Left cardiac atrium (tissue), 4 donors: ENCODE measurements at regions of chr17 and their contacts with region 1.

Region 1: GRCh38 chr17:82781894-82782274 is 30.0 kb downstream of the TBCD start:
- DNase-seq: peak; percentile 84
- ATAC-seq: peak; percentile 94 to 97

Region 2: GRCh38 chr17:82876602-82877379 is 94.9 kb after region 1 on chr17:
- intact Hi-C with region 1: loop called in 1 of 2 experiments (anchors 10 kb)
- DNase-seq: peak; percentile 81
- ATAC-seq: peak; percentile 93 to 97

Region 3: GRCh38 chr17:82917691-82918345 is 135.9 kb after region 1 on chr17:
- intact Hi-C with region 1: loop called (anchors 5 to 10 kb)
- DNase-seq: no peak
- ATAC-seq: no peak

Region 4: GRCh38 chr17:82962864-82963684 is 181.2 kb after region 1 on chr17:
- intact Hi-C with region 1: loop called in 1 of 2 experiments (anchors 5 kb)
- DNase-seq: peak; percentile 89
- ATAC-seq: peak; percentile 93 to 95